ENCODE measurements at regions of chr22 and their contacts with region 1.

Region 1: DNA sequence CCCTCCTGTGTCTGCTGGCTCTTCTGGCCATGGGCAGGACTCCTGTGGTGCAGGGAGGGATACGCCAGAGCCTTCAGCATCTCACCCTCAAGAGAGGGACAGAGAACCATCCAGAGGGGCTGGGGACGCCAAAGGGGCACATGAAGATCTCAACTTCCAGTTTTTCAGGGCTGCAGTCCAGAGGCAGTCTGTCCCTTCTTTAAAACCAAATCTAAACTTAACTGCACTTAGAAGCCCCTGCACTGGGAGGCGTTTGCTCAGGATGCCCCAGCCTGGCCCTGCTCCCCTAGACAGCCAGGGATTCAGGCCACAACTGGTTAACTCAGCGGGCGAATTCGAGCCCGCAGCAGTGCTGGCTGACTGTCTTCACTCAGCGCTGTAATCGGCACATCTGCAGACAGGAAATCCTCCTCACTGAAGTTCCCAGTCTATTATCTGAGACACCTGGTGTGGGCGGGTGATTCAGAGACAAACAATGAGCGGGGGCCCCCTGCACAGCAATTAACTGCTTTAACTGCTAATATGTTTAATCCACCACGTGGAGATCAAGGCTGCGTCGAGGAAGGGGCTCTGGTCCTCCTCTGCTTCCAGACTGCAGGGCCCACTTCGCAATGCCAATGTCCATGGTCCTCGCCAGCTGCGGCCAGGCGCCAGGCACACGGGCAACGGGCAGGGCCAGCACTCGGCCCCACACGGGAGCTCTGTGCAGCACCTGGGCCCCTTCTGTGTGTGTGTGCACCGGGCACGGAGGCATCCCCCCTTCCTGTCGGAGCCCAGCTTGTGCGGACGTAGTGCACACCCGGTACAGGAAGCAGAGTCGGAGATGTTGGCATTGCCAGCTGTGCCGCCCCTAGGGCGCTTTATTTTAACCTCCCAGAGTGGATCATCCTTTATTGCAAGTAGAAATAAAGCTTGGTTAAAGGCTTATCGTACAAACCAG is 36.9 kb upstream of the GNB1L start:
- DNase-seq: peak; percentile 92
- ATAC-seq: peak; percentile 75
- H3K4me3 Mint-ChIP-seq: peak overlapping the region; percentile 72
- H3K27ac Mint-ChIP-seq: peak overlapping the region; percentile 95
- H3K4me1 Mint-ChIP-seq: peaks cover 86% of the 10 kb centered on the region
- H3K27me3 Mint-ChIP-seq: no peaks in the 10 kb centered on the region

Region 2: GRCh38 chr22:19663286-19663815 is 228.2 kb before region 1 on chr22:
- CTCF ChIA-PET with region 1: no interaction called
- POLR2A ChIA-PET with region 1: no interaction called
- intact Hi-C with region 1: no loop called
- DNase-seq: peak; percentile 31
- ATAC-seq: peak; percentile 55
- H3K4me3 Mint-ChIP-seq: no peak overlapping the region
- H3K27ac Mint-ChIP-seq: no peak overlapping the region
- H3K4me1 Mint-ChIP-seq: no peaks in the 10 kb centered on the region
- H3K27me3 Mint-ChIP-seq: no peaks in the 10 kb centered on the region

Region 3: GRCh38 chr22:19874307-19875060 is 17.1 kb before region 1 on chr22:
- CTCF ChIA-PET with region 1: no interaction called
- POLR2A ChIA-PET with region 1: no interaction called
- intact Hi-C with region 1: loop called in 1 of 2 experiments (anchors 1 kb)
- DNase-seq: peak; percentile 61
- ATAC-seq: peak; percentile 78
- H3K4me3 Mint-ChIP-seq: no peak overlapping the region
- H3K27ac Mint-ChIP-seq: no peak overlapping the region
- H3K4me1 Mint-ChIP-seq: peaks cover 10% of the 10 kb centered on the region
- H3K27me3 Mint-ChIP-seq: no peaks in the 10 kb centered on the region

Region 4: DNA sequence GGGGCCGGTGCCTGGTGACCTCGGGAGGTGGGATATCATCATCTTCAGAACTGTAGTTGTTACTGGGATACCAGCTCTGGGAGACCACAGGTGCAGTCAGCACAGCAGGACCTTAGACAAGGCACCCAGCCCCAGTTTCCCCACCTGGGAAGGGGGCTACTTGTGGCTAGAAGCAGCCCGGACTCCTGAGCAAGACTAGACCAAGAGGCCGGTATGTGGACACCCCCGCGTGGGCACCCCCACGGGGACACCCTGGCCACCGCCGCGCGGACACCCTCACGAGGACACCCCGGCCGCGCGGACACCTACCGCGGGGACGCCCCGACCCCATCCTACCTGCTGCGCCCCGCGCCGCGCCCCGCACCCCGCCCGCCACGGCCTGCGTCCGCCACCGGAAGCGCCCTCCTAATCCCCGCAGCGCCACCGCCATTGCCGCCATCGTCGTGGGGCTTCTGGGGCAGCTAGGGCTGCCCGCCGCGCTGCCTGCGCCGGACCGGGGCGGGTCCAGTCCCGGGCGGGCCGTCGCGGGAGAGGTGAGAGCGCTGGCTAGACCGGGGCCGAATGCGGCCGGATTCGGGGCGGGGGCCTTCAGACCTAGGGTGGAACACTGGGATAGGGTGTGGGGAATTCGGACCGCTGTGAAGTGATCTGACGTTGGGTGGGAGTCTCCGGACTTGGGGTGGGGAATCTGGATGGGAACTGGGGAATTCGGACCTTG is 49.9 kb after region 1 on chr22 and contains the starts of genes COMT and TXNRD2:
- CTCF ChIA-PET with region 1: no interaction called
- POLR2A ChIA-PET with region 1: no interaction called
- intact Hi-C with region 1: loop called (anchors 2 kb)
- DNase-seq: peak; percentile 83
- ATAC-seq: peak; percentile 85
- H3K4me3 Mint-ChIP-seq: peak within 1 kb of the TSS; percentile 98
- H3K27ac Mint-ChIP-seq: peak within 1 kb of the TSS; percentile 98
- H3K4me1 Mint-ChIP-seq: peaks cover 27% of the 10 kb centered on the region
- H3K27me3 Mint-ChIP-seq: no peaks in the 10 kb centered on the region
- total RNA-seq, gene COMT: 63.5 to 78.5 TPM
- total RNA-seq, gene TXNRD2: 24.1 to 25.3 TPM

Region 5: DNA sequence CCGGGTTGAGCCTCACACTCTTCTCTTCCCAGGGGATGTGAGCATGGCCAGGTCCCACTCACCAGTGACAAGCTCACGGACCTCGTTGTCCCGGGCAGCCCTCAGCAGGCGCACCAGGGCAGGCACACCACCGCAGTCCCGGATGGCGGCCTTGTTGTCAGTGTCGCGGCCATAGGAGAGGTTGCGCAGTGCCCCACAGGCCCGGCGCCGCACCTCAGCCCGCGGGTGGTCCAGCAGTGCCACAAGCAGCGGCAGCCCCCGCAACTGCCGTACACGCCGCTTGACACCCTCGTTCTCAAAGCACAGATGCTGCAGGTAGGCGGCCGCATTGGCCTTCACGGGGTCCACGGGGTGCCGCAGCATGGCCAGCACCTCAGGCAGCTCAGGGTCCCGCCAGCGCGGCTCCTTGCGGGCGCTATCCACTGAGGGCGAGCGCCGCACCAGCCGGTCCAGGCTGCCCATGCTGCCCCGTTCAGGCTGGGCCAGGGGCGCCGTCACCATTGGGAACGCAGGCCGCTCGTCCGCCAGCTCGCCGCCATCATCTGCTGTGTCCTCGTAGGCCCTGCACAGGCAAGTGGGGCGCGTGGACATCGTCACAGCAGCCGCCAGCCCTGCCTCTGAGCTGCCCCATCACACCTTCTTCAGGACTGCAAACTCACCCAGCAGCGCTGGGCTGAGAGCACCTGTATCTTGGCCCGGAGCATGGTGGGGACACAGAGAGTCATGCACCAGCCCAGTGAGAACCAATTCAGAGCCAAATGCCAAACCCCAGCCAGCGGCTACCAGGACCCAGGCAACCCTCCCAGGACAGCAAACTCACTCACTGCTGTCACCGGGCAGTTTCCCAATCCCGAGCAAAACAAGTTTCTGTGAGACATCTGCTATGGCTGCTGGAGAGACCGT is 88.3 kb after region 1 on chr22:
- CTCF ChIA-PET with region 1: no interaction called
- POLR2A ChIA-PET with region 1: no interaction called
- intact Hi-C with region 1: no loop called
- DNase-seq: no peak
- ATAC-seq: no peak
- H3K4me3 Mint-ChIP-seq: no peak overlapping the region
- H3K27ac Mint-ChIP-seq: no peak overlapping the region
- H3K4me1 Mint-ChIP-seq: peaks cover 4% of the 10 kb centered on the region
- H3K27me3 Mint-ChIP-seq: no peaks in the 10 kb centered on the region

Measured in activated CD4-positive, alpha-beta T cell treated with anti-CD3 and anti-CD28 coated beads for 36 hours (primary cell).